Dorsolateral prefrontal cortex (tissue), 120 donors: ENCODE measurements at regions of chr17 and their contacts with region 1.

Region 1: DNA sequence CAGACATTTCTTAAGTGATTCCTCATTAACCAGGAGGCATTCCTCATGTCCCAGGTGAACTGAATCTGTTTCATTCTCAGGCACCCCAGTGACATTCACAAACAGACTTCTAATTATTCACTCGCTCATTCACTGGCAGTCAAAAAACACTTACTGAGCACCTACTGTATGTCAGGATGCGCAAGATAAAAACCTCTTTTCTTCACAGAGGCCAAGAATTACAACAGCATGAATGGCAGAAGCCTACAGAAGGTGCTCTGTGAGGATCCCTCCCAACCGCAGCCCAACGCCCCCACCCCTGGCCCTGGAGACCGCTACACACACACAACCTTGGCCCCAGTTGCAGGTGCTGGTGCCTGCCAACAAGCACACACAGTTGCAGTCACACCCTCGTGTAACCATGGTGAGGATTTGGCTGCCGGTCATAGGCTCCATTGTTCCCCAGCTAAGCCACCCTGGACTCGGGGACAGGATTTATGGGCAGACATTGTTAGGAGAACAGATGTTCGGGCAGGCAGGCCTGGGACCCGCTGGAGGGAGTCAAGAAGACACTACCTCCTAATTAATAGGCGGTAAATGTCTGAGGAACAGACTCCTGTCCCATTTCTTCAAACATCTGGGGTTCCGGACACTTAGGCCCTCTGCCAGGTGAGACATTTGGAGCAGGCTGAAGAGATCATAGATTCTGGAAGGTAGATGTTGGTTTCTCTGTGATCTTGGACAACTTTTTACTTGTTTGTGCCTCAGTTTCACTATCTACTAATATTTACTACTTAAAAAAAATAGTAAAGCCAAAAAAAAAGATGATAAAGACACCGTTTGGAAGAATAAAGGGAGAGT is 43.2 kb downstream of the CUEDC1 start:
- DNase-seq: peak; percentile 59 to 98 (median 92)
- H3K4me3 ChIP-seq: peak overlapping the region in 32 of 59 donors; percentile 2 to 54 (median 24)
- H3K27ac ChIP-seq: peak overlapping the region; percentile 58 to 100 (median 95)
- H3K27me3 ChIP-seq: no peaks in the 10 kb centered on the region
- CTCF ChIP-seq: peak in 10 of 56 donors; percentile 9 to 35 (median 18)

Region 2: GRCh38 chr17:57946798-57947358 is 34.8 kb after region 1 on chr17:
- intact Hi-C with region 1: loop called in 1 of 2 experiments (anchors 5 kb)
- DNase-seq: peak in 1 of 10 donors; percentile 52
- H3K4me3 ChIP-seq: peak overlapping the region; percentile 17 to 67 (median 51)
- H3K27ac ChIP-seq: peak overlapping the region; percentile 50 to 100 (median 92)
- H3K27me3 ChIP-seq: no peaks in the 10 kb centered on the region
- CTCF ChIP-seq: peak in 1 of 56 donors; percentile 12

Region 3: DNA sequence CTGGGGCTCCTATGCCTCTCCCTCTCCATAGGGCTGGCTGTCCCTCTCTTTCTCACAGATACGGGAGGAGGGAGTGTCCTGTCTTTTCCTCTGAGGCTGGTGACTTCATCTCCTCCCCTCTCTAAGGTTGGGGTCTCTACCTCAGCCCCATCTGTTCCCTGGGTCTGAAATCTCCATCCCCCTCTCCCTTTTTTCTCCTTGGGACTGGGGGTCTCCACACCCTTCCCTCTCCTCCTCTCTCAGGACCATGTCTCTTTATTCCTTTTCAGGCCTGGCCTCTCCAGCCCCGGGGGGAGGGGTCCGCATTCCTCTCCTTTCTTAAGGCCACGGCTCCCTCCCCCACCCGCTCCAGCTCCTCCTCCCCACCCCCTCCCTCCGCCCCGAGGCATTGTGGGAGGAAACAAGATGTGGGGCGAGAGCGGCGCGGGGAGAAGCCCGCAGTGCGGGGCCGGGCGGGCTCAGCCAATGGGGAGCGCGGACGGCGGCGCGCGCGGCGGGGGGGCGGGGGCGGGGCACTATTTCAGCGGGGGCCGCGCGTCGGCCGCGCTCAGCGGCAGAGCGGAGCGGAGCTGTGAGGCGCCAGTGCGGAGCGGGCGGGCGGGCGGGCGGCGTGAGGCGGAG is 170.9 kb after region 1 on chr17 and contains the start of gene DYNLL2:
- intact Hi-C with region 1: no loop called
- DNase-seq: peak; percentile 77 to 93 (median 88)
- H3K4me3 ChIP-seq: peak within 1 kb of the TSS; percentile 47 to 99 (median 92)
- H3K27ac ChIP-seq: peak within 1 kb of the TSS; percentile 67 to 97 (median 94)
- H3K27me3 ChIP-seq: no peaks in the 10 kb centered on the region
- CTCF ChIP-seq: peak in 2 of 56 donors; percentile 11 to 18
- total RNA-seq, gene DYNLL2: 59.6 to 128 (median 88.8) TPM